AG04450 (cell line): ENCODE measurements at regions of chr6 and their contacts with region 1.

Region 1: GRCh38 chr6:48765352-48765961 is 654.5 kb upstream of the PTCHD4 start:
- DNase-seq: peak; percentile 44
- H3K4me3 ChIP-seq: no peak overlapping the region
- H3K27ac ChIP-seq: no peak overlapping the region
- H3K27me3 ChIP-seq: no peaks in the 10 kb centered on the region
- CTCF ChIP-seq: peak; percentile 74

Region 2: GRCh38 chr6:47631269-47631772 is 1134.1 kb before region 1 on chr6:
- CTCF ChIA-PET with region 1: interaction called, 15 read pairs
- POLR2A ChIA-PET with region 1: no interaction called
- DNase-seq: no peak
- H3K4me3 ChIP-seq: no peak overlapping the region
- H3K27ac ChIP-seq: no peak overlapping the region
- H3K27me3 ChIP-seq: no peaks in the 10 kb centered on the region
- CTCF ChIP-seq: peak; percentile 62

Region 3: GRCh38 chr6:47787620-47788497 is 977.6 kb before region 1 on chr6:
- CTCF ChIA-PET with region 1: interaction called, 36 read pairs
- POLR2A ChIA-PET with region 1: no interaction called
- DNase-seq: peak; percentile 20
- H3K4me3 ChIP-seq: no peak overlapping the region
- H3K27ac ChIP-seq: no peak overlapping the region
- H3K27me3 ChIP-seq: peaks cover 3% of the 10 kb centered on the region
- CTCF ChIP-seq: peak; percentile 90

Region 4: DNA sequence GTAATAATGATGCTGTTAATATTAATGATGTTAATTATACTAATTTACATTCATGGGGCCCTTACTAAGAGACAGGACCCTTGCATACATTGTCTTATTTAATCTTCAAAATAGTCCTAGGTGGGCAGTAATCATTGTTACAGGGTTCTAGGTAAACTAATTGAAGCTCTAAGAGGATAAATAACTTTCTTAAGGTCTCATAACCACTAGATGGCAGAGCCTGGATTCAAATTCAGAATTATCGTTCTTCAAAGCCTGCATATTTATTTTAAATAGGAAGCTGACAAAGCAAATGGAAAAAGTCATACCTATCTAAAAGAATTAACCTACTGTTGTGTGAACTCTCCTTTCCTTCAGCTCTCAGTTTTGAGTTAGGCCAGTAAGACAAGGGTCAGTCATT is 678.0 kb before region 1 on chr6:
- CTCF ChIA-PET with region 1: interaction called, 30 read pairs
- POLR2A ChIA-PET with region 1: interaction called, 3 read pairs
- DNase-seq: no peak
- H3K4me3 ChIP-seq: no peak overlapping the region
- H3K27ac ChIP-seq: no peak overlapping the region
- H3K27me3 ChIP-seq: no peaks in the 10 kb centered on the region
- CTCF ChIP-seq: peak; percentile 39; the same call in 1 of the 2 replicates

Region 5: GRCh38 chr6:48429021-48429420 is 336.4 kb before region 1 on chr6:
- CTCF ChIA-PET with region 1: interaction called, 12 read pairs
- POLR2A ChIA-PET with region 1: interaction called, 3 read pairs
- DNase-seq: no peak
- H3K4me3 ChIP-seq: no peak overlapping the region
- H3K27ac ChIP-seq: no peak overlapping the region
- H3K27me3 ChIP-seq: no peaks in the 10 kb centered on the region
- CTCF ChIP-seq: no peak

Region 6: GRCh38 chr6:48744948-48745347 is 20.5 kb before region 1 on chr6:
- CTCF ChIA-PET with region 1: interaction called, 11 read pairs
- POLR2A ChIA-PET with region 1: no interaction called
- DNase-seq: no peak
- H3K4me3 ChIP-seq: no peak overlapping the region
- H3K27ac ChIP-seq: no peak overlapping the region
- H3K27me3 ChIP-seq: no peaks in the 10 kb centered on the region
- CTCF ChIP-seq: no peak

Region 7: DNA sequence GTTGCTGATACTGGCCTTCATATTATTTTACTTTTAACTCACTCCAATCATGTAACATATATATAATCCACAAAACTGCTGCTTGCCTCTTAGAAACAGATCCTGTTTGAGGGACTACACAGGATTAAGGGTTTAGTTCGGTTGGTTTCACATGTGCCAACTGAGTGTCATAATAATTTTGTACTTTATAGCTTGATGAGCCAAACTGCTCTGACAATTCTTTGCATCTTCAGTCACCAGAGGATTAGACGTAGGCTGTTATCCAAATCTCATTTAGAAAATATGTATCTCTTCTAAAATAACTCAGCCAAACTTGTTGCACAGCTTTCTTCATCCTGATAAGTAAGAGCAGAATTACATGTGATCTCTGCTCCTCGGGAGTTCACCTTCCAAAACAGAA is 10.8 kb before region 1 on chr6:
- CTCF ChIA-PET with region 1: interaction called, 16 read pairs
- POLR2A ChIA-PET with region 1: no interaction called
- DNase-seq: no peak
- H3K4me3 ChIP-seq: no peak overlapping the region
- H3K27ac ChIP-seq: no peak overlapping the region
- H3K27me3 ChIP-seq: no peaks in the 10 kb centered on the region
- CTCF ChIP-seq: no peak

Region 8: GRCh38 chr6:49220293-49220692 is 454.8 kb after region 1 on chr6:
- CTCF ChIA-PET with region 1: no interaction called
- POLR2A ChIA-PET with region 1: no interaction called
- DNase-seq: no peak
- H3K4me3 ChIP-seq: no peak overlapping the region
- H3K27ac ChIP-seq: no peak overlapping the region
- H3K27me3 ChIP-seq: no peaks in the 10 kb centered on the region
- CTCF ChIP-seq: no peak